Activated CD4-positive, alpha-beta memory T cell treated with anti-CD3 and anti-CD28 coated beads for 36 hours (primary cell): ENCODE measurements at regions of chr22 and their contacts with region 1.

Region 1: GRCh38 chr22:35622191-35622913 is 5.2 kb upstream of the MB start:
- DNase-seq: no peak
- H3K4me3 Mint-ChIP-seq: no peak overlapping the region
- H3K27ac Mint-ChIP-seq: no peak overlapping the region
- H3K4me1 Mint-ChIP-seq: peaks cover 3% of the 10 kb centered on the region
- H3K27me3 Mint-ChIP-seq: peaks cover 3% of the 10 kb centered on the region

Region 2: GRCh38 chr22:35611891-35612576 is 10.3 kb before region 1 on chr22:
- CTCF ChIA-PET with region 1: interaction called, 10 read pairs
- POLR2A ChIA-PET with region 1: no interaction called
- intact Hi-C with region 1: no loop called
- DNase-seq: no peak
- H3K4me3 Mint-ChIP-seq: no peak overlapping the region
- H3K27ac Mint-ChIP-seq: no peak overlapping the region
- H3K4me1 Mint-ChIP-seq: peaks cover 20% of the 10 kb centered on the region
- H3K27me3 Mint-ChIP-seq: peaks cover 10% of the 10 kb centered on the region